GM12878 (cell line): ENCODE measurements at regions of chrX and their contacts with region 1.

Region 1: DNA sequence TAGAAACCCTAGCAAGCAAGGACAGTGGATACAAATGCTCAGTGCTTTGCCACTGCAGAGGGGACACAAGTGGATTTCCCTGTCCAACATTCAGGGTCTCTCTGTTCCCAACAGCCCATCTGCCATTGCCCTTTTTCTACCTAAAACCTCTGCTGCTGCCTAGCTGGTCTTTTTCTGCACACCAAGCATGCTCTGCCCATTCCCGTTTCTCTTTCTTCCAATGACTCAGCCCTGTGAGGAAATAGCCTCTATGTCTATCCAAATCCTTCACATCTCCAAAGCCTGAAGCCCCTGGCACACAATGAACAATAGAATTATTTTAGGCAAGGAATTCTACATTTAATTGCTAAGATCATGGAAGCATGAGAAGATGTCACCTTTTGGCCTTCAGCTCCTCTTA is 5.7 kb upstream of the AMELX start:
- DNase-seq: no peak
- ATAC-seq: no peak
- H3K4me3 ChIP-seq: no peak overlapping the region
- H3K27ac ChIP-seq: no peak overlapping the region
- H3K4me1 ChIP-seq: no peaks in the 10 kb centered on the region
- H3K27me3 ChIP-seq: no peaks in the 10 kb centered on the region
- CTCF ChIP-seq: no peak
- EP300 ChIP-seq: no peak
- POLR2A ChIP-seq: no peak
- RAD21 ChIP-seq: no peak

Region 2: DNA sequence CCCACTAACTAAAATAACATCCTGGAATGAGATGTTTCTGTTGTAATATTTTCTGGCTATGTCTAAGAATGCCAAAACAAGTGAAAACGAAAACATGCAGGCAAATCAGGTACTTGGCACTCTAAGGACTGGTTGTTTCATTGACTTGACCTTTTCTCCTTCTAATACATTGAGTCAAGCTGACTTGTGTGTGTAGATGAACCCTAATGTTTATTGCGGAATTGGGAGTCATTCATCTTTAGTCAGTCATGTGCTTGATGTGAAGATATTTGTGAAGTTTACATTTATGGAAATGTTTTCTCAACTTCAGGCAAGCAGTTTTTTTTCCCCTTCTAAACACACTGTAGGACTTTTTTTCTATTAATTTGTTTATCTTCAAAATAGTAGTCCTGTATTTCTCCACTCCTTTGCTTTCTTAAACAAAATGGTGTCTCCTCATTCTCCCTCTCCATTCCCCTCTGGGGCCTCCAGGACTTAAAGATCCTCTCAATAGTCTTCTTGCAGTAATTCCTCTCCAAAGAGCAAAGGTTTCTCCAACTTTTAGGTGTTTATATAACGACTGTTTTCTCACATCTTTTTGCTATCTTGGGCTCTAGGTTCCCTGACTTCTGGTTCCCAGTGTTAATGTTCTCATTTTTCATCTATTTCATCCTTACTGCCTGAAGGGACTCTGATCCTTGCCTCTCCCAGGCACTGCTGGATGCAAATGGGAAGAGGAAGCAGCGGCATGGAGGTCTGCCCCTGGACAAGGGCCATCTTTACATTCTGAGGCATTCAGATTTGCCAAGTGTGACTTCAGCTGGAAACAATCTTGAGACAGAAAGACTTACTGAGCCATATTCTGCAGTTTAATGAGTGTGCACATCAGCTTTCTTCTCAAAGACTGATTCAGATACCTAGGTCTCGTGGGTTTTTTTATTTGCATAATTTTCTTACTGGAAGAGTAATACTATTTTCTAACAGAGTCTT is 211.9 kb after region 1 on chrX:
- CTCF ChIA-PET with region 1: no interaction called
- POLR2A ChIA-PET with region 1: interaction called, 11 read pairs
- RAD21 ChIA-PET with region 1: no interaction called
- SMC1A ChIA-PET with region 1: no interaction called
- in situ Hi-C with region 1: no loop called
- intact Hi-C with region 1: no loop called
- DNase-seq: no peak
- ATAC-seq: no peak
- H3K4me3 ChIP-seq: no peak overlapping the region
- H3K27ac ChIP-seq: no peak overlapping the region
- H3K4me1 ChIP-seq: no peaks in the 10 kb centered on the region
- H3K27me3 ChIP-seq: no peaks in the 10 kb centered on the region
- CTCF ChIP-seq: no peak
- EP300 ChIP-seq: no peak
- POLR2A ChIP-seq: no peak
- RAD21 ChIP-seq: no peak